MCF 10A (cell line): ENCODE measurements at regions of chr11 and their contacts with region 1.

Region 1: DNA sequence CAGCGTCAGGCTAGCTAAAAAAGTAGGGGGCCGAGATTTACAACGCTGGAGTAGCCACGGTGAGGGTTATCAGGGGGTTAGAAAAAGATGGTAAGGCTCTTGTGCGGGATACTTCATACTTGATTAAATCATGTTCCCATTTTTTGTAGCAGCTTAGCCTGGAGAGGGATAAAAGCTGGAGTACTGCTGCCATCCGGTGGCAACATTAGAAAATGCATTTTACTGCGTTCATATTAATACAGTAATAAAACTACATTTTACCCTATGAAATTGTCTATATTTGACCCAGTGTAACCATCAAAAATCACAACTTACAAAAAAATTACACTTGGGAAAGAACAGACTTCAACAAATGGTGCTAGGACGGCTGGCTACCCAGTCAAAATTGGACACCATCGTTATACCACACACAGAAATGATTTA is 17.3 kb downstream of the RPUSD4 start:
- DNase-seq: peak; percentile 59
- H3K4me3 Mint-ChIP-seq: no peak overlapping the region
- H3K27ac Mint-ChIP-seq: no peak overlapping the region
- H3K4me1 Mint-ChIP-seq: peaks cover 10% of the 10 kb centered on the region
- H3K27me3 Mint-ChIP-seq: no peaks in the 10 kb centered on the region
- CTCF ChIP-seq: peak; percentile 65

Region 2: DNA sequence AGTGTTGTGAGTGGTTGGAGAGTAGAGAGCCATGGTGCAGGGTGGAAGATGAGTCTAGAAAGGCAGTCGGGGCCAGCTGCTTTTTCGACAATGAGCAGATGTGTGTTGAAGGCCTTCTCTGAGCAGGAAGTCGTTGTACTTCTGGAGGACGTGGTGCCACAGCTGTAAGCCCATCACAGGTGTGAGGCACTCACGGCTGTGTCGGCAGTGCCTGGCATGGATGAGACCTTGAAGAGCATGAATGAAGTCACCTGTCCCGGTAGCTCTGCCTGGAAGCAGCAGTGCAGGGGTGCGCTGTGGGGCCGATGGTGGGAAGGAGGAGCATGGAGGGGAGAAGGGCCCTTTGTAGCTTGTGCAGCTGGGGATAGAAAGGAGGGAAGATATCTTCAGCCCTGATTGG is 864.3 kb before region 1 on chr11:
- CTCF ChIA-PET with region 1: no interaction called
- POLR2A ChIA-PET with region 1: no interaction called
- intact Hi-C with region 1: no loop called
- DNase-seq: no peak
- H3K4me3 Mint-ChIP-seq: no peak overlapping the region
- H3K27ac Mint-ChIP-seq: no peak overlapping the region
- H3K4me1 Mint-ChIP-seq: no peaks in the 10 kb centered on the region
- H3K27me3 Mint-ChIP-seq: peaks cover 46% of the 10 kb centered on the region
- CTCF ChIP-seq: no peak

Region 3: DNA sequence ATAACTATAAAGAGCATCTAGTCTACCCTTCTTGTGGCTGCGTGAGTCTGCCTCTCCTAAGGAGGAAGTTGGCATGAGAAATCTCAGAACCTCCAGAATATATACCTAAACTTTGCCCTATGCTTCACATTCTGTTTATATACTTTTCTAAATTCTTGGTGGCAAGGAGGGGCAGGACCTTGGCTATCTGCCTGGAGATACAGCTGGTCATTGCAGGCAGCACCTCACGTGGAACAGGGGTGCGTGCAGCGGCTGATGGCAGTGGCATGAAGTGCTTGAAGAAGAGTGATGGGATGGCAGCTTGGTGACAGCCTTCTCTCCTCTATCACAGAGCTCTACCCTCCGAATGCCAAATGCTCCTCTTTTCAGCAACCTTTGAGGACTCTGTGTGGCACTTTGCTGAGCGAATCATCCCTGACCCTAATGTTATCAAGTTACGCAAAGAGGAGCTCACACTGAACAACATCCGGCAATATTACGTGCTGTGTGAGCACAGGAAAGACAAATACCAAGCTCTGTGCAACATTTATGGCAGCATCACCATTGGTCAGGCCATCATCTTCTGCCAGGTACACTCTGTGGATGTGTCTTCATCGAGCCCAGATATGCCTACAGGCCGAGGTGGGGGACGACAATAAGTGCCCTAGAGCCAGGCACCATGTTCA is 277.3 kb before region 1 on chr11:
- CTCF ChIA-PET with region 1: interaction called, 114 read pairs
- POLR2A ChIA-PET with region 1: no interaction called
- intact Hi-C with region 1: no loop called
- DNase-seq: no peak
- H3K4me3 Mint-ChIP-seq: no peak overlapping the region
- H3K27ac Mint-ChIP-seq: no peak overlapping the region
- H3K4me1 Mint-ChIP-seq: no peaks in the 10 kb centered on the region
- H3K27me3 Mint-ChIP-seq: peaks cover 63% of the 10 kb centered on the region
- CTCF ChIP-seq: no peak

Region 4: GRCh38 chr11:125941619-125942611 is 252.2 kb before region 1 on chr11:
- CTCF ChIA-PET with region 1: interaction called, 33 read pairs
- POLR2A ChIA-PET with region 1: no interaction called
- intact Hi-C with region 1: loop called (anchors 1 kb)
- DNase-seq: peak; percentile 61
- H3K4me3 Mint-ChIP-seq: no peak overlapping the region
- H3K27ac Mint-ChIP-seq: peak overlapping the region; percentile 32
- H3K4me1 Mint-ChIP-seq: peaks cover 9% of the 10 kb centered on the region
- H3K27me3 Mint-ChIP-seq: no peaks in the 10 kb centered on the region
- CTCF ChIP-seq: peak; percentile 70

Region 5: DNA sequence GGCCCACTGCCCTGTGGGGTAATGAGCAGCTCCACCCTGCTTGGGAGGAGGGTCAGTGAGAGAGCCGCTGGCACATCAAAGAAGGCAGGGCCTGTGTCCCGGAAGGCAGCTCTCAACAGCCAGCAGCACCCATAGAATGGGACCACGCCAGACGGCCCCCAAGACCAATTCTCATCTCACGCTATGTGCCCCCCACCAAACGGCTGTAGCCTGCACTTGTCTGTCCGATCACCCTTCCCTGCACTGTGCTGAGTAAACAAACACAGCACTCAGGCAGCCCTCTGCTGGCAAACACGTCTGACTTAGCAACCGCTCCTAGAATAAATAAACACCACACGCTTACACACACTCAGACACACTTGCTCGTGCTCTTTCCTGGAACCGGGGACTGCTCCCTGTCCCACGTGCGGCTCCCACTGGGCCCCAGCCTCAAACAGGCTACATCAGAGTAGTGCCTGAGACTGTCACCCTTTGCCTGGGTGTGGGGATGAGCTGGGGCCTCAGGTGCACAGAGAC is 78.3 kb before region 1 on chr11:
- CTCF ChIA-PET with region 1: interaction called, 18 read pairs
- POLR2A ChIA-PET with region 1: no interaction called
- intact Hi-C with region 1: loop called (anchors 10 kb)
- DNase-seq: peak; percentile 71
- H3K4me3 Mint-ChIP-seq: no peak overlapping the region
- H3K27ac Mint-ChIP-seq: peak overlapping the region; percentile 14
- H3K4me1 Mint-ChIP-seq: peaks cover 24% of the 10 kb centered on the region
- H3K27me3 Mint-ChIP-seq: no peaks in the 10 kb centered on the region
- CTCF ChIP-seq: no peak

Region 6: DNA sequence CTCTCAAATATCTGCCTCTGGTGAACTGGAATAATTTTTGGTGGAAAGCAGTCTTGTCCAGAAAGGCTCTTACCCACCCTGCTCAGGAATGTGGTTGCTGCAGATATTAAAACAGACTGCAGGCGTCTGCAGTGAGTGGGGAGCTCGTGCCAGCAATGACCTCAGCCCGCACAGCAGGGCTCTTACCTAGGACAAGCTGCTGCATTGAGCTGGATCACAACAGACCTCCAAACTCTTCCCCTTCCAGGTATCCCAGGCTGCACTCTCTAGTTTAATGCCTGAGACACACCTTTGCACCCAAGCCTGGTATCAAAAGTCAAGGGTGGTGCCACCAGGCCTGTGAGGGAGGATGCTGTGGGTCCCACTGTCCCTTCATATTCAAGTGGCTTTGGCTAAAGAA is 61.8 kb before region 1 on chr11:
- CTCF ChIA-PET with region 1: interaction called, 25 read pairs
- POLR2A ChIA-PET with region 1: interaction called, 4 read pairs
- intact Hi-C with region 1: no loop called
- DNase-seq: peak; percentile 63
- H3K4me3 Mint-ChIP-seq: peak overlapping the region; percentile 68
- H3K27ac Mint-ChIP-seq: peak overlapping the region; percentile 99
- H3K4me1 Mint-ChIP-seq: peaks cover 17% of the 10 kb centered on the region
- H3K27me3 Mint-ChIP-seq: no peaks in the 10 kb centered on the region
- CTCF ChIP-seq: no peak